ENCODE measurements at regions of chr11 and their contacts with region 1.

Region 1: GRCh38 chr11:126133901-126134300 is 71.2 kb upstream of the CDON start:
- DNase-seq: no peak
- H3K4me3 ChIP-seq: no peak overlapping the region
- H3K27me3 ChIP-seq: peaks cover 6% of the 10 kb centered on the region
- CTCF ChIP-seq: no peak

Region 2: GRCh38 chr11:125968354-125968753 is 165.5 kb before region 1 on chr11:
- CTCF ChIA-PET with region 1: no interaction called
- POLR2A ChIA-PET with region 1: no interaction called
- DNase-seq: no peak
- H3K4me3 ChIP-seq: no peak overlapping the region
- H3K27me3 ChIP-seq: no peaks in the 10 kb centered on the region
- CTCF ChIP-seq: no peak

Region 3: GRCh38 chr11:126115816-126116331 is 18.0 kb before region 1 on chr11:
- CTCF ChIA-PET with region 1: interaction called, 14 read pairs
- POLR2A ChIA-PET with region 1: interaction called, 3 read pairs
- DNase-seq: peak; percentile 71
- H3K4me3 ChIP-seq: no peak overlapping the region
- H3K27me3 ChIP-seq: no peaks in the 10 kb centered on the region
- CTCF ChIP-seq: peak; percentile 46

Region 4: GRCh38 chr11:126163074-126163700 is 29.3 kb after region 1 on chr11:
- CTCF ChIA-PET with region 1: no interaction called
- POLR2A ChIA-PET with region 1: no interaction called
- DNase-seq: peak; percentile 91
- H3K4me3 ChIP-seq: no peak overlapping the region
- H3K27me3 ChIP-seq: peaks cover 7% of the 10 kb centered on the region
- CTCF ChIP-seq: peak; percentile 26; the same call in 1 of the 2 replicates

Measured in BJ (cell line).